ENCODE measurements at regions of chr12 and their contacts with region 1.

Region 1: DNA sequence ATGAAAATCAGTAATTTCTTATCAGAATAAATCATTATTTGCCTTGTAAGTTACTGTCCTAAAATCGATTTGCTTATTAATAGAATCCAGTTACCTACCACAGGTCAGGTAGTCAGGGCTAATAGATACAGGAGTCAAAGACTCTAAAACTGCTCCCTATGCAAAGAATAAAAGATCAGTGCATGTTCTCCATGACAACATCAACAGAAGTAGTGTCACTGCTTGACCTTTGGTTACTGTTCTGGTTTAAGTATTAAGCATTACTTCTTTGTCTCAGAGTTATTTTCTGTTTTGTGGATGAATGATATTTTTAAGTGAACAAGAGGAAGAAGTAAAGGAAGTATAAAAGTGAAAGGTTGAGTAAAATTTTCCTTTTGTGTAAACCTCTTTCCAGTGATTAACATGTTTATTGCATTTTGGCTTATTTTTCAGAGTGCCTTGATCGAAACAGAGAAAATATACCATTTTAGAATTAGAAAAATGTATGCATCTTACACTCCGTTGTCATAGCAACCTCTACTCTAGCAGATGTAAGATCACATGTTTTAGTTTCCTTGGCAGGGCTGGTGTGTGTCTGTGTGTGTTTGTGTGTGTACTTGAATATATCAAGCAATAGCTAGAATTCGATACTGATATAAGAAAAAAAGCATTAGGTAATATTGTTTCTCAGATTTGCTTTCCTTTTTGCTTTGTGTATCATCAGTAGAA is 44.7 kb downstream of the ABCD2 start:
- DNase-seq: no peak
- CTCF ChIP-seq: no peak

Region 2: DNA sequence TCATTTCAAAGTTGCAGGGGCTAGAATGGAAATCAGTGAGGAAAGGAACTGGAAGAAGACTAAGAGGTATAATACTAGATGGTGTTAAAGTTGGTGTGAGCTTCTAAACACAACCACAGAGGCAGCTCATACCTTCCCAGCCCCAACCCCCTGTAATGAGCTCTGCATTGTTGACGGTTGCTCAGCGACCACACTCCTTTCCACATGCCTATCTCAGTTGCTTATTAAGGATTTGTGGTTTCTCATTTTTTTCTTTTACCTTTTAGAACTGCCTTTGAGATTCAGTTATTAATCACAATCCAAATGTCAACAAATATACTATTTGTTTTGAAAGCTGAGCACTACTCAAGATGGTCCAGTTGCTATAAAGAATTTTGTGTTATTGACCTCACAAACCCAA is 69.9 kb before region 1 on chr12:
- CTCF ChIA-PET with region 1: no interaction called
- POLR2A ChIA-PET with region 1: no interaction called
- DNase-seq: no peak
- CTCF ChIP-seq: no peak

Region 3: DNA sequence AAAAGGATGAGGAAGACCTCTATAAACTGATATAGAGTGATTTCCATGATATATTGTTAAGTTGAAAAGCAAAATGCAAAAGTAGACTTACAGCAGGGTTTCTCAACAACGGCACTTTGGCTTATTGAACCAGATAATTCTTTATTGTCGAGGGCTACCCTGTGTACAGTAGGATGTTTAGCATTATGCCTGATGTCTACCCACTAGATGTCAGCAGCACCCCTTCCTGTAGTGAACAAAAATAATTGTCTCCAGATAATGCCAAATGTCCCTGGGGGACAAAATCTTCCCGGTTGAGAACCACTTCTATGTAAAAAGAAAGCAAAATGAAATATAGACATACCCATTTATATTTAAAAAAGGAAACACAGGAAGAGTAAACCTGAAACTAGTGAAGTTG is 12.3 kb after region 1 on chr12:
- CTCF ChIA-PET with region 1: interaction called, 11 read pairs
- POLR2A ChIA-PET with region 1: no interaction called
- DNase-seq: no peak
- CTCF ChIP-seq: peak; percentile 44

Measured in GM10248 (cell line).